IMR-90 (cell line): ENCODE measurements at regions of chr20 and their contacts with region 1.

Region 1: GRCh38 chr20:56143759-56144158 is 104.8 kb upstream of the MC3R start:
- DNase-seq: no peak
- ATAC-seq: no peak
- H3K4me3 ChIP-seq: no peak overlapping the region
- H3K27ac ChIP-seq: no peak overlapping the region
- H3K4me1 ChIP-seq: no peaks in the 10 kb centered on the region
- H3K27me3 ChIP-seq: no peaks in the 10 kb centered on the region
- CTCF ChIP-seq: no peak
- POLR2A ChIP-seq: no peak
- RAD21 ChIP-seq: no peak

Region 2: DNA sequence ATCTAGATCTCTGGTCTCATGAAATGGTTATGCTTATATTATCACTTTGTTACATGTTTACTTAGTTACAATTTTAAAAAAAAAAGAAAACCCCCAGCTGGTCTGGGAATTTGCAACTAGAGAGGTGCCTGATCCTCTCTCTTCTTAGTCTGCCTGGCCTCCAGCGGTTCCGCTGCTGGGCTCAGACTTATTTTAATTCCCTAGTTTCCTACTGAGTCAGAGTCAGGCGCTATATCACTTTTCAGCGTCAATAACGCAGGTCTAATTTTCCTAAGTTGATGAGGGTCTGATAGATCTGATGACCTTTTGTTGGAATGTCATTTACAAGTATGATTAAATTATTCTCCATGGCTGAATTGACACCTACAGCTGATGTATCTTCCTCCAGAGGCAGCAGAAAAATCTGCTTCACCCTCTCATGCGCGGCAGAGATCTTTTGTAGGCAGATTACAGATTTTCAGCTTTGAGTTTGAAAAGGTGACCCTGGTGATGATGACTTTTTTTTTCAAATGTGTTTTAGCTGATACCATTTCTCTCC is 529.5 kb before region 1 on chr20:
- CTCF ChIA-PET with region 1: no interaction called
- POLR2A ChIA-PET with region 1: no interaction called
- dilution Hi-C with region 1: no loop called
- in situ Hi-C with region 1: no loop called
- intact Hi-C with region 1: loop called (anchors 5 kb)
- DNase-seq: no peak
- ATAC-seq: no peak
- H3K4me3 ChIP-seq: no peak overlapping the region
- H3K27ac ChIP-seq: no peak overlapping the region
- H3K4me1 ChIP-seq: no peaks in the 10 kb centered on the region
- H3K27me3 ChIP-seq: no peaks in the 10 kb centered on the region
- CTCF ChIP-seq: no peak
- POLR2A ChIP-seq: no peak
- RAD21 ChIP-seq: no peak

Region 3: DNA sequence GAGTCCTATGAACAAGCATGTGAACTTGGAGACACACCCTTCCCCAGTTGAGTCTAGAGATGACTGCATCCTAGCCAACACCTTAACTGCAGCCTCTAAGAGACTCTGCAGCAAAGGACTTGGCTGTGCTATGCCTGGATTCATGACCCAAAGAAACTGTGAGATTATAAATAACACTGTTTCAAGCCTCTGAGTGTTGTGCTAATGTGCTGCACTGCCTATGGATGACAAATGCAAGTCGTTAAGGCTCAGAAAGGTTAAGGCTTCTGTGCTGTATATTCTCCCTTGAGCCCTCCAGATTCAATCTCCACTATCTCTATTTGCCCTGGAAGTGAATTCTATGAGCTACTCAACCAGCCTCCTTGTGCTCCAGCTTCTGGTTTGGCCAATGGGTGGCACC is 21.9 kb before region 1 on chr20:
- CTCF ChIA-PET with region 1: no interaction called
- POLR2A ChIA-PET with region 1: no interaction called
- dilution Hi-C with region 1: no loop called
- in situ Hi-C with region 1: no loop called
- intact Hi-C with region 1: no loop called
- DNase-seq: no peak
- ATAC-seq: no peak
- H3K4me3 ChIP-seq: no peak overlapping the region
- H3K27ac ChIP-seq: no peak overlapping the region
- H3K4me1 ChIP-seq: no peaks in the 10 kb centered on the region
- H3K27me3 ChIP-seq: no peaks in the 10 kb centered on the region
- CTCF ChIP-seq: no peak
- POLR2A ChIP-seq: no peak
- RAD21 ChIP-seq: no peak